ENCODE measurements at regions of chr3 and their contacts with region 1.

Region 1: DNA sequence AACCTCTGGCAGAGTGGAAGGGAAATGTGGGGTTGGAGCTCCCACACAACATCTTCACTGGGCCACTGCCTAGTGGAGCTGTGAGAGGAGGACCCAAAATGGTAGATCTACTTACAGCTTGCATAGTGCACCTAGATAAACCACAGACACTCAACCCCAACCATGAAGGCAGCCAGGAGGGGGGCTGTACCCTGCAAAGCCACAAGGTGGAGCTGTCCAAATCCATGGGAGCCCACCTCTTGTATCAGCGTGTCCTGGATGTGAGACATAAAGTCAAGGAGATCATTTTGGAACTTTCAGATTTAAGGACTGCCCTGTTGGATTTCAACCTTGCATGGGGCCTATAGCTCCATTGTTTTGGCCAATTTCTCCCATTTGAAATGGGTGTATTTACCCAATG is 20.9 kb downstream of the TP63 start:
- DNase-seq: no peak
- H3K4me3 ChIP-seq: no peak overlapping the region
- H3K4me3 Mint-ChIP-seq: no peak overlapping the region
- H3K27ac ChIP-seq: no peak overlapping the region
- H3K27ac Mint-ChIP-seq: no peak overlapping the region
- H3K4me1 ChIP-seq: peaks cover 0 to 8% of the 10 kb centered on the region in 2 donors
- H3K4me1 Mint-ChIP-seq: peaks cover 3% of the 10 kb centered on the region
- H3K27me3 ChIP-seq: no peaks in the 10 kb centered on the region
- H3K27me3 Mint-ChIP-seq: no peaks in the 10 kb centered on the region
- CTCF ChIP-seq: no peak

Region 2: DNA sequence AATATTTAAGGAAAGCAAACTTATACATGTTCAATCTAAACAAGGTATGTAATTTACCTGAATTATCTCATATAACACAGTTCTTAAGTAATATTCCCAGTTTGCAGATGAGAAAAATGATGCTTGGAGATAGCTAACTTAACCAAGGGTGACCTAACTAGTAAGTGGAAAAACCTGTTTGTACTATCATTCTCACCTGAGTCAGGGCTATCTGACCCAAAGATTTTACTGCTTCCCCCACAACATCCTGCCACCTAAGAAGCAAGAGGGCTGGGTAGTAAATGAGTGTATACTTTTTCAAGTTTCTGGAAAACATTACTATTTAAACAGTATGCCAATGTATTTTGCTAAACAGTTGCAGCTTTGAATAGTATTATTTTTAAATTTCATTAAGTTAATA is 10.3 kb before region 1 on chr3:
- intact Hi-C with region 1: loop called in 1 of 2 experiments (anchors 1 kb)
- DNase-seq: no peak
- H3K4me3 ChIP-seq: no peak overlapping the region
- H3K4me3 Mint-ChIP-seq: no peak overlapping the region
- H3K27ac ChIP-seq: no peak overlapping the region
- H3K27ac Mint-ChIP-seq: no peak overlapping the region
- H3K4me1 ChIP-seq: peaks cover 0 to 8% of the 10 kb centered on the region in 2 donors
- H3K4me1 Mint-ChIP-seq: peaks cover 4% of the 10 kb centered on the region
- H3K27me3 ChIP-seq: no peaks in the 10 kb centered on the region
- H3K27me3 Mint-ChIP-seq: peaks cover 2 to 4% (median 2%) of the 10 kb centered on the region in 3 donors
- CTCF ChIP-seq: no peak